Endothelial cell of umbilical vein (primary cell): ENCODE measurements at regions of chr1 and their contacts with region 1.

Region 1: DNA sequence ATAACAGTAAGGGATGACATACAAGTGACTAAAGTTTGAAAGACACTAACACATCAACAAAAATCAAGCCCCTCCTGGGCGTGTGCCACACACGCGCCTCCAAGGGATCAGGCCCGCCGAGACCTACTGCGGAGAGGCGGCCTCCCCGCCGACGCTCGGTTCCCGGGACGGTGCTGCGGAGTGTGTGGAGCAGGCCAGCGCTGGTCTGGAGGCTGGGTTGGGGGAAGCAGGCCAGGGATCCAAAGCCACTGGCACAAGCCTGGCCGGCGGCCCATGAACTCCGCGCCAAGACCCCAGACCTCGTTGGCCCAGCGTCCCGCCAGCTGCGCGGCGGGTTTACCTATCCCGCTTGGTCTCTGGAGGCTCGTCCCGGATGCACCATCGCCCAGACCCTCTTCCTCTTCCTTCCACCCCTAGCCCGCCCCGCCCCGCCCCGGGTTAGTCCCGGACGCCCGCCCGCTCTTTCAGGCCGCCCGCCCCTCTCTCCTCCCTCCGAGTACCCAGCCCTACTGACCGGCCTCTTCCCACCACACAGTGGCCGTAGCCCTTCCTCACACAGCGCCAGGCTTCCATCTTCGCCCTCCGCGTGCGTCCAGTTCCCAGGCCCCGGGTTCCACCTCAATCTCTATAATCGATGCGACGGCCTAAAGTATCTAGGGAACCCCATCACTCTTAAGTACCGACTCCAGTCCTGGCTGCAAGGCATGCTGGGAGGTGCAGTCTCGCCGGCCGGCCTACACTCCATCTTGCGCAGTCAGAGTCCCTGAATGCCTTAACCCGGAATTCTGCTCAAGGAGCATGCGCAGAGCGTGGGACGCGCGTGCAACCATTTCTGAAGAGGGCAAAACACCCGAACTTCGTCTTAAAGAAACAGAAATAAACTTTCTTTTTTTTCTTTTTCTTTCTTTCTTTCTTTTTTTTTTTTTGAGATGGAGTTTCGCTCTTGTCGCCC is at the start of gene ANGEL2:
- DNase-seq: peak; percentile 98
- H3K4me3 ChIP-seq: peak within 1 kb of the TSS; percentile 47 to 86 (median 85)
- H3K27ac ChIP-seq: peak within 1 kb of the TSS; percentile 27
- H3K4me1 ChIP-seq: peaks cover 6% of the 10 kb centered on the region
- H3K27me3 ChIP-seq: peaks cover under 1 to 4% of the 10 kb centered on the region in 2 experiments
- CTCF ChIP-seq: no peak
- POLR2A ChIP-seq: peak; percentile 97
- total RNA-seq, gene ANGEL2: 31.6 and 39.1 TPM in 2 replicates

Region 2: DNA sequence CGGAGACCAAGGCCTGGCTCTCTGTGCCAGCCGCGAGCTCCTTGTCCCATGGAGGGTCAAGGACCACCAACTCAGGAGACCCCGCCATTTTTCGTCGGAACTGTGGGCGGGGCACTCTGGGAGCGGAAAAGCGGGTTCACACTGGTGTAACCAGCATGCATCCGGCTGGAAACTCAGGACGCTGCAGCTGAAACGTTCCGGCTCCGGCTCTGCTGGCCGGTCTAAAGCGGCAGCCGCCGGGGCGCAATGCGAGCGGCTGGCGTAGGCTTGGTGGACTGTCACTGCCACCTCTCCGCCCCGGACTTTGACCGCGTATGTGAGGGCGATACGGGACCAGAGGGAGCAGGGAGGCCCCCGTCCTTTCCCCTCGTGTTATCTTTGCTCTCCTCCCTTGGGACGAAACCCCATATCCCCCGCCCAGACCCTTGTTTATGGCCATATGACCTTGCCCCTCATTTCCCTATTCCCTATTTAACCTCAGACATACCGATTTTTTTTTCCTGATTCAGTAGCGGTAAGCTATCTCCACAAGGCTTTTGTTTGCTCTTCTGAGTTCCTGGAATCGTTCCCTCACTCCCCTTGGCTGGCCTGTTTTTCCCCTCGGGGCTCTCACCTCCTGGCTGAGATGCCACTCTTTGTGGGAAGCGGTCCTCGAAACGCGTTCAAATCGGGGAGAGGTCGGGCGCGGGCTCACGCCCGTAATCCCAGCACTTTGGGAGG is 223.5 kb before region 1 on chr1 and contains the starts of genes NSL1 and TATDN3:
- CTCF ChIA-PET with region 1: no interaction called
- POLR2A ChIA-PET with region 1: no interaction called
- dilution Hi-C with region 1: no loop called
- intact Hi-C with region 1: loop called (anchors 1 kb)
- DNase-seq: peak; percentile 95
- H3K4me3 ChIP-seq: peak within 1 kb of the TSS; percentile 77 to 97 (median 94)
- H3K27ac ChIP-seq: peak within 1 kb of the TSS; percentile 81
- H3K4me1 ChIP-seq: peaks cover 21% of the 10 kb centered on the region
- H3K27me3 ChIP-seq: no peaks in the 10 kb centered on the region
- CTCF ChIP-seq: no peak
- POLR2A ChIP-seq: peak; percentile 92
- total RNA-seq, gene NSL1: 27.7 and 30.2 TPM in 2 replicates
- total RNA-seq, gene TATDN3: 7.8 and 8.0 TPM in 2 replicates

Region 3: DNA sequence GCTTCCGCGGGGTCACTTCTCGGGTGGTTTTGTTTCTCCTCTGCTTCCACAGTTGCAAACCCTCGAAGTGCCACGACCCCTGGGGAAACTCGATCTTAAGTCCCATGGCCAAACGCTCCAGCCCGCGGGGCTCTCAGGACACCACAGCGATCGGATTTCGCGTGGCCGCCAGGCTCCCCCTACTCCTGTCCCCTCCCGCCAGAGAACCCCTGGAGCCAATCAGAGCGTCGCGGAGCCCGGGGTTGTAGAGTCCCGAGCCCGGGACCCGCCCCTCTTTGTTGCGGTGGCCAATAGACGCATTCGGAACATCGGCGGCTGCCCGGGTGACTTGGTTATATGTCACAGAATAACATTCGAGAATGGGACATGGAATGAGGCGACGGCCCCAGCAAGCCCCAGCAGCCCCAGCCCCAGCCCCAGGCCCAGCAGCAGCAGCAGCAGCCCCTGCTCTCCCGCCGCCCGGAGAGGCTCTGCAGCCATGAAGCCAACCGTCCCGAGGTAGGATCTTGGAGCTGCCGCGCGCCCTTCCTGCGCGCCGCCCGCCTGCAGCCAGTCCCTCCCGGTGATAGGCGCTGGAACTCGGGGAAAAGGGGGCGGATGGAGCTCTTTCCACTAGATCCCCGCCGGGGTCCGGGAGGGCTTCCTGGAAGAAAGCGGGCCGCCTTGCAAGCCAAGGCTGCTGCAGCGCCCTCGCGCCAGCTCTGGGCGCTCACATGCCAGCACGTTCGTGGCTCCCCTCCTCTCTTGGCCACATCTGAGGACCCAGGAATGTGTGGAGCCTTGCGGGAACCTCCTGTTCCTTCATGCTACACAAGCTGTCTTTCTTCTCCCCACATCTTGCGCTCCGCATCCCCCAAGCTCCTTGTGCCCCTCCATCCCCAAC is 64.9 kb before region 1 on chr1 and contains the start of gene VASH2:
- CTCF ChIA-PET with region 1: no interaction called
- POLR2A ChIA-PET with region 1: no interaction called
- dilution Hi-C with region 1: no loop called
- intact Hi-C with region 1: loop called (anchors 2 kb)
- DNase-seq: peak; percentile 83
- H3K4me3 ChIP-seq: peak within 1 kb of the TSS; percentile 20 to 60 (median 48)
- H3K27ac ChIP-seq: no peak within 1 kb of the TSS
- H3K4me1 ChIP-seq: peaks cover 9% of the 10 kb centered on the region
- H3K27me3 ChIP-seq: peaks cover 15 to 17% of the 10 kb centered on the region in 2 experiments
- CTCF ChIP-seq: peak in 1 of 2 donors; percentile 5
- POLR2A ChIP-seq: no peak
- total RNA-seq, gene VASH2: 1.4 and 2.9 TPM in 2 replicates

Region 4: GRCh38 chr1:213051127-213051880 is 35.9 kb after region 1 on chr1 and contains the start of gene RPS6KC1:
- CTCF ChIA-PET with region 1: no interaction called
- POLR2A ChIA-PET with region 1: no interaction called
- dilution Hi-C with region 1: no loop called
- intact Hi-C with region 1: loop called (anchors 1 kb)
- DNase-seq: peak; percentile 74
- H3K4me3 ChIP-seq: peak within 1 kb of the TSS; percentile 83 to 95 (median 84)
- H3K27ac ChIP-seq: peak within 1 kb of the TSS; percentile 35
- H3K4me1 ChIP-seq: peaks cover 6% of the 10 kb centered on the region
- H3K27me3 ChIP-seq: peaks cover 0 to under 1% of the 10 kb centered on the region in 2 experiments
- CTCF ChIP-seq: no peak
- POLR2A ChIP-seq: peak; percentile 54
- total RNA-seq, gene RPS6KC1: 14.9 and 18.6 TPM in 2 replicates

Region 5: DNA sequence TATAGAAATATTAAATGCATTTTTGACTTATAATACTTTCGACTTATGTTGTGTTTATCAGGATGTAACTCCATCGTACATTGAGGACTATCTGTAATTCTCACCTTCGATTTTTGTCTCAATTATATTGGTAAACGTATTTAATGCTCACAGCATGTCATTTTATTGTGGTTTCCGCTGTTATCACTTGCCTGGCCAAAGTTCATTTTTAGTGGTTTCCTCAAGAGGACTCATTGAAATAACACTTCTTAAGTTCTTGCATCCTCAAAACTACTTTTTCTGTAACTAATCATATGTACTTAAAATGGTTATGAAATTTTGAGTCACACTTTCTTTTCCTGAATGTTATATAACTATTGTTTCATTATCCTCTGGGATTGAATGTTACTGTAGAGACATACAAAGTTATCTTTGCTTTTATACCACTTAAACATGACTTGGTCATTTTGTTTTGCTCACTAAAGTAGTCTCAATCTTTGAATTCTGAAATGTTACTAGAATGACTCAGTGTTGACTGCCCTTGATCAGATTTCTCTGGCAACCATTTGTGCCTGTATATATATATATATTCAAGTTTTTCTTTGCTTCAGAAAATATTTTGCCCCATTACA is 682.8 kb after region 1 on chr1:
- CTCF ChIA-PET with region 1: no interaction called
- POLR2A ChIA-PET with region 1: no interaction called
- dilution Hi-C with region 1: no loop called
- intact Hi-C with region 1: no loop called
- DNase-seq: peak; percentile 19
- H3K4me3 ChIP-seq: no peak overlapping the region
- H3K27ac ChIP-seq: no peak overlapping the region
- H3K4me1 ChIP-seq: no peaks in the 10 kb centered on the region
- H3K27me3 ChIP-seq: no peaks in the 10 kb centered on the region
- CTCF ChIP-seq: no peak
- POLR2A ChIP-seq: no peak